ENCODE measurements at regions of chr16 and their contacts with region 1.

Region 1: DNA sequence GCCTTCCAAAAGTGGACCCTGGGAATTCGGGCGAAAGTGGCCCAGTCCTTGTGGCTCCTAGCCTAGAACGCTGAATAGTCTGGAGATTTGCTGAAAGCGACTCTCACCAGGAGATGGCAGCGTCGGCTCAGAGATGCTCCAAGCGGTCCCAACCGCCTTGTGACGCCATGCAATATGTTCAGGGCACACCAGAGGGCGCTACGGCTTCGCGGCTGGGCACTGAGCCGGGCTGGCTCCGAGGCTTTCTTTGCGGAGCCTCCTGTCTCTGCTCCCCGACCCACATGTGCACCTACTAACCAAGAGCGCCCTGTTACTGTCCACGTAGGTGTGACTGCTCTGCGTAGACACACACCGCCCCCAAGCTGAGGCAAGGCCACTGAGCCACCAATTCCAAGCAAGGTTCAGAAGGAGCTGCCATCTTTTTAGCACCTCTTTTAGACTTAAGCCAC is 36.9 kb downstream of the SYCE1L start:
- DNase-seq: peak; percentile 79 to 93 (median 88)
- ATAC-seq: peak; percentile 99
- H3K4me3 ChIP-seq: peak overlapping the region; percentile 28 to 33
- H3K4me3 Mint-ChIP-seq: peak overlapping the region; percentile 57
- H3K27ac ChIP-seq: no peak overlapping the region
- H3K27ac Mint-ChIP-seq: no peak overlapping the region
- H3K4me1 ChIP-seq: peaks cover 4% of the 10 kb centered on the region
- H3K4me1 Mint-ChIP-seq: peaks cover 7% of the 10 kb centered on the region
- H3K27me3 ChIP-seq: no peaks in the 10 kb centered on the region
- H3K27me3 Mint-ChIP-seq: peaks cover 27% of the 10 kb centered on the region
- CTCF ChIP-seq: peak; percentile 99

Region 2: DNA sequence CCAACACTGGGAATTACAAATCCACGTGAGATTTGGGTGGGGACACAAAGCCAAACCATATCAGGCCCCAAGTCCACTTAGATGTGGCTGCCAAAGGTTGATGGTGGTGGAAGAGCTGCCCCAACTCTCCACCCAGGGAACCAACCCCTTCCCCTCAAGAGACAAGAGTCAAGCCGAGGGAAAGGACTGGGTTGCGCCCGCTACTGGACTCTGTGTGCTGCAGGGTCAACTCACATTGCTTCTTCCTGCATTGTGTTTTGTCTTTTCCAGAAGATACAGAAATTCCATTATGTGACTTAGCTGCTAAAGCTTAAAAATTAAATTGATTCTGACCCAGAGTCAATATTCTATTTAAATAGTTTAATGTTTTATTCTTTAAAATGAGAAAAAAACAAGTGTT is 140.3 kb after region 1 on chr16:
- CTCF ChIA-PET with region 1: no interaction called
- POLR2A ChIA-PET with region 1: no interaction called
- intact Hi-C with region 1: loop called in 1 of 2 experiments (anchors 10 kb)
- DNase-seq: peak in 3 of 9 experiments; percentile 2 to 19 (median 12)
- ATAC-seq: no peak
- H3K4me3 ChIP-seq: no peak overlapping the region
- H3K4me3 Mint-ChIP-seq: no peak overlapping the region
- H3K27ac ChIP-seq: no peak overlapping the region
- H3K27ac Mint-ChIP-seq: no peak overlapping the region
- H3K4me1 ChIP-seq: no peaks in the 10 kb centered on the region
- H3K4me1 Mint-ChIP-seq: no peaks in the 10 kb centered on the region
- H3K27me3 ChIP-seq: no peaks in the 10 kb centered on the region
- H3K27me3 Mint-ChIP-seq: no peaks in the 10 kb centered on the region
- CTCF ChIP-seq: no peak

Region 3: DNA sequence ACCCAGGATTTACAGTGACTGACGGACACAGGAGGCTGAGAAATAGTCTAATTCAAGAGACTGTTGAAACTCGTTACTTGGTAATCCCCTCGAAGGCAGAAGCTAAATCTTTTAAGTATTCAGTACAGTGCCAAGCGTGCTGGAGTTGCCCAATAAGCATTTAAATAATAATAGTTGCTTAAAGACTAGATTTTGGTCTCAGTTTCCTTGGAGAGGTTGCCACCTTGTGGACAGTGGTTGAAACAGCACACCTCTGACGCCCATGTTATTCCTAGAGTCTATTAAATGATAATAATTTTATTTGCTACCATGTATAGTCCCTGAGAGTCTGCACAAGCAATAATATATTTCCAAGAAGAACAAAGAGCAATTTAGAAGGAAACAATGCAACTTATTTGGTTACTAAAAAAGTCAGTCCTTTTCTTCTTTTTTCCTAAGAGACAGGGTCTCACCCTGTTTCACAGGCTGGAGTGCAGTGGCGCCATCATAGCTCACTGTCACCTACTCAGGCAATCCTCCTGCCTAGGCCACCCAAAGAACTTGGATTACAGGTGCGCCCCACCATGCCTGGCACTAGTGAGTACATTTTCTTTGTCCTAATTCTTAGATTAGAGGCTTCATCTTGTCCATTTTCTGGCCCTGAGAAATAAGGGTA is 348.2 kb after region 1 on chr16:
- CTCF ChIA-PET with region 1: interaction called, 116 read pairs
- POLR2A ChIA-PET with region 1: no interaction called
- intact Hi-C with region 1: loop called (anchors 1 kb)
- DNase-seq: peak in 7 of 9 experiments; percentile 9 to 60 (median 41)
- ATAC-seq: peak; percentile 36
- H3K4me3 ChIP-seq: no peak overlapping the region
- H3K4me3 Mint-ChIP-seq: no peak overlapping the region
- H3K27ac ChIP-seq: no peak overlapping the region
- H3K27ac Mint-ChIP-seq: no peak overlapping the region
- H3K4me1 ChIP-seq: no peaks in the 10 kb centered on the region
- H3K4me1 Mint-ChIP-seq: no peaks in the 10 kb centered on the region
- H3K27me3 ChIP-seq: peaks cover 0 to 3% of the 10 kb centered on the region in 2 experiments
- H3K27me3 Mint-ChIP-seq: peaks cover 12% of the 10 kb centered on the region
- CTCF ChIP-seq: peak; percentile 88

Region 4: DNA sequence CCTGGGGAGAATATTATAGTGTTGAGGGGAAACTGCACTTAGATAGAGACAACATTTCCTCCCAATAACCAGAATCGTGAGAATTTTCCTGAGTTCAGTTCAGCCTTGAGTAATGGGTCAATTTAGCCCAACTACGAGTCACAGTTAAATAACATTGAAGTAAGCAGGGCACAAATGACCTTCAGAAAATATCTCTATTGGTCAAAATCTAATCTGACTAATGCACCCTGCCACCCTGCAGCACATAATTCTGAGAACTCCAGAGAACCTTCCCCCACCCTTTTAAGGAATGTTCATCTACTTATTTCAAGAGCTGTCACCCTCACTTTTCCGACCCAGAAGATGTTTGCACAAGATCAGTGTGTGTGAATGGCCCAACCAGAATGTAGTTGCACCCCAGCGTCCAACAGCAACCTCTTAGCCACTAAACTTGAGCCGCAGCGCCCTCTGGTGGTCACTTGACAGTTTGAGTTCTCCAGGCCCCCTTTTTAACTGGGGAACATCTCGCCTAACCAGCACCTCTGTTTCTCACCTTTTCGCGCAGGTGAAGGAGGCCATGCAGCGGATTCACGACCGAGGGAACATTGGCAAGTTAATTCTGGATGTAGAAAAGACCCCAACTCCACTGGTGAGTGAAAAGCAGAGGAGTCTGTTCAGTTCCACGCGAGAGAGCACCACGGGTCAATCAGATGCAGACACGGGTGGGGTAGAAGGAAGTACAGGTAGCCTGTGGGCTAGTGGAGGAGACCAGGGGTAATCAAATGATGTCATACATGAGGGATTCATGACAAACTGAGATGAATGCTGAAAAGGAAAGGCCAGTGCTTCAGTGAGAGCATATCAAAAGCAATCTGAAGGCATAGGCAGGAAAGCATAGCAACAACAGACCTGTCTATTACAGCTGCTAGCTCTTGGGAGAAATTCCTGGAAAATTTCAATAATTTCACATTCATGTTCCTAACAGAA is 735.5 kb after region 1 on chr16:
- CTCF ChIA-PET with region 1: no interaction called
- POLR2A ChIA-PET with region 1: no interaction called
- intact Hi-C with region 1: loop called (anchors 2 kb)
- DNase-seq: peak; percentile 34 to 83 (median 70)
- ATAC-seq: no peak
- H3K4me3 ChIP-seq: no peak overlapping the region
- H3K4me3 Mint-ChIP-seq: no peak overlapping the region
- H3K27ac ChIP-seq: no peak overlapping the region
- H3K27ac Mint-ChIP-seq: no peak overlapping the region
- H3K4me1 ChIP-seq: no peaks in the 10 kb centered on the region
- H3K4me1 Mint-ChIP-seq: no peaks in the 10 kb centered on the region
- H3K27me3 ChIP-seq: no peaks in the 10 kb centered on the region
- H3K27me3 Mint-ChIP-seq: peaks cover 22% of the 10 kb centered on the region
- CTCF ChIP-seq: peak; percentile 65